ENCODE measurements at regions of chr9 and their contacts with region 1.

Region 1: DNA sequence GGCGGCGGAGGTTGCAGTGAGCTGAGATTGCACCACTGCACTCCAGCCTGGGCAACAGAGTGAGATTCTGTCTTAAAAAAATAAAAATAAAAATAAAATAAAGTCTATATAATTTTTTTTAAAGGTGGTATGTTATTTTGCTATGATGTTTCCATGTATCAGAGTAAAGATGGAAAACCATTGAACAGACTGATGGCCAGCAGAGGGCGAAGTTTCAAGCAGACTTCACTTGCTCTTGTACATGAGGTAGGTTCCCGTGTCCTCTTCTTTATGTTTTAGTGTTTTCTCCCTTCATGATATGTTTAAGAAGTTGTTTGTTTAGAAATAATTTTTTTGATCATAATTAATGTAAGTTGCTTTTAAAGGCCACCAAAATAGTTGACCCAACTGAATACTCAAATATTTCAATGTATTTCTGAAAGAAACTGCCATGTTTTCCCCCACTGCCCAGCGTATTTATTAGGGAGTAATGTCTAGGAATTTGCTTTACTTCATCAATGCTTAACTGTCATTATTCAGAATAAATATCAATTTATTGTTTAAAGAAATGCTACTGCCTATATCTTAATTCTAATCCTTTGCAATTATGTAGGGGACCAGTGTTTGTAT is 146.4 kb downstream of the HACD4 start:
- DNase-seq: peak; percentile 15
- ATAC-seq: peak; percentile 89
- H3K4me3 ChIP-seq: no peak overlapping the region
- H3K27ac ChIP-seq: no peak overlapping the region
- H3K4me1 ChIP-seq: no peaks in the 10 kb centered on the region
- H3K27me3 ChIP-seq: no peaks in the 10 kb centered on the region
- CTCF ChIP-seq: peak; percentile 52 to 56 (median 52)
- EP300 ChIP-seq: no peak
- POLR2A ChIP-seq: no peak
- RAD21 ChIP-seq: peak; percentile 27; the same call in 1 of the 2 replicates

Region 2: DNA sequence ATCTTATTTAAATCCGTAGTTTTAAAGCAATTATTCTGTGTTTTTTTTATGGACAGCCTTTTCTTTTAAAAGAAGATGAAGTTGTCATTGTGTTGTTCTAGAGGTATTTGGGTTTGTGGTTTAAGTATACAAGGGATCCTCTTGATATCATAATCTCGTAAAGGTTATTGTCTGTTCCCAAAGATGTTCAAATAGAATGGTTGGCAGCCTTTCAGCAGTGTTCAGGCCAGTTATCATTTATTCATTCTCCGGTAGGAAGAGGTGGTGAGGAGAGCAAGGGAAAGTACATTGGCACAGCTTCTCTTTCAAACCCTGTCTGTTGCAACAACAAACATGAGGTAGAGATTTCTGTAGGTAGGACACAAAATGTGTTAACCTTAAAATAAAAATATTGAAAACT is 54.1 kb before region 1 on chr9:
- CTCF ChIA-PET with region 1: no interaction called
- POLR2A ChIA-PET with region 1: no interaction called
- RAD21 ChIA-PET with region 1: no interaction called
- SMC1A ChIA-PET with region 1: no interaction called
- in situ Hi-C with region 1: no loop called
- intact Hi-C with region 1: no loop called
- DNase-seq: no peak
- ATAC-seq: no peak
- H3K4me3 ChIP-seq: no peak overlapping the region
- H3K27ac ChIP-seq: no peak overlapping the region
- H3K4me1 ChIP-seq: no peaks in the 10 kb centered on the region
- H3K27me3 ChIP-seq: no peaks in the 10 kb centered on the region
- CTCF ChIP-seq: no peak
- EP300 ChIP-seq: no peak
- POLR2A ChIP-seq: no peak
- RAD21 ChIP-seq: no peak

Region 3: DNA sequence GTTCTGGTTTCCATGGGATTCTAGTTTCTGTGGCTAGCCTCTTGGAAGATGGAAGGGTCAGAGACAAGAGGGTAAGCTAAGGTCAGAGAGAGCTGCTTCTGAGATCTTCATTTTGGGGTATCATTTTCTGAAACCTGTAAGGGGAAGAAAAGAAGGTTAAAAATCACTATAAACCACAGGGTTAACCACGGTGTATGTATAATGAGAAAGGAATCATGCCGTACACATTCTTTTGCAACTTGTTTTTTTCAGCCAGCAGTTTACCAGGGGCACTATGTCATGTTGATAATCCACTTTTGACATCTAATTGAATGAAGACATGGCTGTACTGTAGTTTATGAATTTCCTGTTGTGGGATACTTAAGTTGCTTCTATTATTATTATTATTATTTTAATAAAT is 36.6 kb before region 1 on chr9:
- CTCF ChIA-PET with region 1: interaction called, 10 read pairs
- POLR2A ChIA-PET with region 1: no interaction called
- RAD21 ChIA-PET with region 1: no interaction called
- SMC1A ChIA-PET with region 1: interaction called, 3 read pairs
- in situ Hi-C with region 1: no loop called
- intact Hi-C with region 1: no loop called
- DNase-seq: no peak
- ATAC-seq: peak; percentile 57
- H3K4me3 ChIP-seq: no peak overlapping the region
- H3K27ac ChIP-seq: no peak overlapping the region
- H3K4me1 ChIP-seq: no peaks in the 10 kb centered on the region; the same call in 1 of the 2 replicates
- H3K27me3 ChIP-seq: no peaks in the 10 kb centered on the region
- CTCF ChIP-seq: no peak
- EP300 ChIP-seq: no peak
- POLR2A ChIP-seq: no peak
- RAD21 ChIP-seq: no peak

Region 4: DNA sequence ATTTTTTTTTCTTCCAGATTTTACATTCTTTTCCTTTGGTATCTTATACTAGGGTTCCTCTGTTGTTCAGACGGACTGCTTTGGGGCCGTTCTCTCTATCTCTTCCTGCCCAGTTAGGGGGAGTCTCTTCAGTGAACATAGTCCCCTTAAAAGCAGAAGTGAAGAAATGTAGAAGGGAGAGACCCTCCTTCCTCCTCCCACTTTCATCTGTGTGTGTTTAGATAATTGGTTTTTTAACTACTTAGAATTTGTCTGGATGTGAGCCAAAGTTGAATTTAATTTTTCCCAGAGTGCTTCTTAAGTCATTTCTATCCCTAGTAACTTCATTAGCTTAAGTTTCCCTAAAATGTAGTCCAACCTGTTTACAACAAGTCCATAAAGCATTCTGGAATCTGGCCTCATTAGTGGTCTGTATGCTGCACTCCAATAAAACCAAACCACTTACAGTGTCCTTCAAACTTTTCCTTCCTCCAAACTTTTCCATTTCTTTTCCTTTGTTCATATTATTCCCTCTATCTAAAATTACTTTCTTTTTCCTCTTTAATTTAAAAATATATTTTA is 21.1 kb before region 1 on chr9:
- CTCF ChIA-PET with region 1: interaction called, 59 read pairs
- POLR2A ChIA-PET with region 1: no interaction called
- RAD21 ChIA-PET with region 1: interaction called, 3 read pairs
- SMC1A ChIA-PET with region 1: interaction called, 15 read pairs
- in situ Hi-C with region 1: no loop called
- intact Hi-C with region 1: no loop called
- DNase-seq: no peak
- ATAC-seq: peak; percentile 69
- H3K4me3 ChIP-seq: no peak overlapping the region
- H3K27ac ChIP-seq: no peak overlapping the region
- H3K4me1 ChIP-seq: no peaks in the 10 kb centered on the region
- H3K27me3 ChIP-seq: no peaks in the 10 kb centered on the region
- CTCF ChIP-seq: no peak
- EP300 ChIP-seq: no peak
- POLR2A ChIP-seq: no peak
- RAD21 ChIP-seq: no peak

Region 5: GRCh38 chr9:20872340-20872977 is 12.6 kb before region 1 on chr9:
- CTCF ChIA-PET with region 1: interaction called, 59 read pairs
- POLR2A ChIA-PET with region 1: no interaction called
- RAD21 ChIA-PET with region 1: interaction called, 6 read pairs
- SMC1A ChIA-PET with region 1: interaction called, 18 read pairs
- in situ Hi-C with region 1: no loop called
- intact Hi-C with region 1: no loop called
- DNase-seq: no peak
- ATAC-seq: peak; percentile 18; the same call in 1 of the 3 replicates
- H3K4me3 ChIP-seq: no peak overlapping the region
- H3K27ac ChIP-seq: no peak overlapping the region
- H3K4me1 ChIP-seq: peaks cover 12% of the 10 kb centered on the region
- H3K27me3 ChIP-seq: no peaks in the 10 kb centered on the region
- CTCF ChIP-seq: no peak
- EP300 ChIP-seq: no peak
- POLR2A ChIP-seq: no peak
- RAD21 ChIP-seq: no peak

Region 6: GRCh38 chr9:20898885-20899554 is 13.9 kb after region 1 on chr9:
- CTCF ChIA-PET with region 1: interaction called, 28 read pairs
- POLR2A ChIA-PET with region 1: no interaction called
- RAD21 ChIA-PET with region 1: no interaction called
- SMC1A ChIA-PET with region 1: interaction called, 12 read pairs
- in situ Hi-C with region 1: no loop called
- intact Hi-C with region 1: no loop called
- DNase-seq: no peak
- ATAC-seq: no peak
- H3K4me3 ChIP-seq: no peak overlapping the region
- H3K27ac ChIP-seq: no peak overlapping the region
- H3K4me1 ChIP-seq: no peaks in the 10 kb centered on the region
- H3K27me3 ChIP-seq: no peaks in the 10 kb centered on the region
- CTCF ChIP-seq: no peak
- EP300 ChIP-seq: no peak
- POLR2A ChIP-seq: no peak
- RAD21 ChIP-seq: no peak

Region 7: GRCh38 chr9:20906326-20906725 is 21.2 kb after region 1 on chr9:
- CTCF ChIA-PET with region 1: interaction called, 20 read pairs
- POLR2A ChIA-PET with region 1: no interaction called
- RAD21 ChIA-PET with region 1: no interaction called
- SMC1A ChIA-PET with region 1: interaction called, 5 read pairs
- in situ Hi-C with region 1: no loop called
- intact Hi-C with region 1: no loop called
- DNase-seq: no peak
- ATAC-seq: no peak
- H3K4me3 ChIP-seq: no peak overlapping the region
- H3K27ac ChIP-seq: no peak overlapping the region
- H3K4me1 ChIP-seq: no peaks in the 10 kb centered on the region
- H3K27me3 ChIP-seq: no peaks in the 10 kb centered on the region
- CTCF ChIP-seq: no peak
- EP300 ChIP-seq: no peak
- POLR2A ChIP-seq: no peak
- RAD21 ChIP-seq: no peak

Region 8: DNA sequence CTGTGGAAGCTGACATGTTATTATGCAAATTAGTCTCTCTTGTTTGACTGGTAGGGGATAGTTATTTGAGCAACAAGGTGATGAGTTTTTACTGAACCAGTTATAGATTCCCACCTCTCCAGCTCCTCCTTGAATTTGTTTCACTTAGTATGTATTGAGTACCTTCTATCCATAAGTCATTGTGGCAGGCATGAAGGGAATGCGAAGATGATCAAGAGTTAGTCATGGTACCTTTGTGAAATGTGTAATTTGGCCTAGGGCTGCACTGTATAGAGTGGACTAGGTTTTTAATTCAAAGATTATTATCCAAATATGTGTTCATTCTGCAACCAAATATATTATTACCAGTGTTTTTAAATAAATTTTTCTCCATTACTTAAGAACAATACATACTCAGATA is 36.3 kb after region 1 on chr9:
- CTCF ChIA-PET with region 1: interaction called, 10 read pairs
- POLR2A ChIA-PET with region 1: no interaction called
- RAD21 ChIA-PET with region 1: no interaction called
- SMC1A ChIA-PET with region 1: no interaction called
- in situ Hi-C with region 1: no loop called
- intact Hi-C with region 1: no loop called
- DNase-seq: no peak
- ATAC-seq: no peak
- H3K4me3 ChIP-seq: no peak overlapping the region
- H3K27ac ChIP-seq: no peak overlapping the region
- H3K4me1 ChIP-seq: no peaks in the 10 kb centered on the region
- H3K27me3 ChIP-seq: no peaks in the 10 kb centered on the region
- CTCF ChIP-seq: no peak
- EP300 ChIP-seq: no peak
- POLR2A ChIP-seq: no peak
- RAD21 ChIP-seq: no peak

Region 9: DNA sequence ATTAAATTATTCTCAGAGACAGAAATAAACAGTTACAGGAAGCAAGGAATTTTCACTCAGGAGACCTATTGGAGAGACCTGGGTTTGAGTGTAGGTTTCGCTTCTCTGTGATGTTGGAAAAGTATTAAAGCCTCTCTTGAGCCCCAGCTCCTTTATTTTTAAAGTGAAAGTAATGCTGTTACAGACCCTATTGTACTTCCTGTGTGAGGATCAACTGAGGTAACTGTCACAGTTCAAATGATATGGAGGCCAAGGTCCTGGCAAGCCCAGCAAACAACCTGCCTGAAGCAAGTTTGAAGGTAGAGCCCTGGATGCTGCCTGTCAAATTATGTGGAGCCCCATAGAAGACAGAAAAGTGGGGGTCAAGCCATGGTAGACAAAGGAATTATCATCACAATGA is 154.2 kb after region 1 on chr9:
- CTCF ChIA-PET with region 1: no interaction called
- POLR2A ChIA-PET with region 1: no interaction called
- RAD21 ChIA-PET with region 1: no interaction called
- SMC1A ChIA-PET with region 1: no interaction called
- in situ Hi-C with region 1: no loop called
- intact Hi-C with region 1: no loop called
- DNase-seq: no peak
- ATAC-seq: peak; percentile 15; the same call in 1 of the 3 replicates
- H3K4me3 ChIP-seq: no peak overlapping the region
- H3K27ac ChIP-seq: no peak overlapping the region
- H3K4me1 ChIP-seq: no peaks in the 10 kb centered on the region
- H3K27me3 ChIP-seq: no peaks in the 10 kb centered on the region
- CTCF ChIP-seq: no peak
- EP300 ChIP-seq: no peak
- POLR2A ChIP-seq: no peak
- RAD21 ChIP-seq: no peak

Measured in GM12878 (cell line).